Endothelial cell of umbilical vein (primary cell): ENCODE measurements at regions of chr22 and their contacts with region 1.

Region 1: GRCh38 chr22:22150457-22150856 is 94.1 kb upstream of the VPREB1 start:
- DNase-seq: no peak
- H3K4me3 ChIP-seq: no peak overlapping the region
- H3K27ac ChIP-seq: no peak overlapping the region
- H3K4me1 ChIP-seq: no peaks in the 10 kb centered on the region
- H3K27me3 ChIP-seq: peaks cover 26 to 61% of the 10 kb centered on the region in 2 experiments
- CTCF ChIP-seq: no peak
- POLR2A ChIP-seq: no peak

Region 2: GRCh38 chr22:22138915-22139314 is 11.5 kb before region 1 on chr22:
- CTCF ChIA-PET with region 1: interaction called, 10 read pairs
- POLR2A ChIA-PET with region 1: no interaction called
- dilution Hi-C with region 1: no loop called
- intact Hi-C with region 1: no loop called
- DNase-seq: no peak
- H3K4me3 ChIP-seq: no peak overlapping the region
- H3K27ac ChIP-seq: no peak overlapping the region
- H3K4me1 ChIP-seq: no peaks in the 10 kb centered on the region
- H3K27me3 ChIP-seq: peaks cover 36 to 76% of the 10 kb centered on the region in 2 experiments
- CTCF ChIP-seq: no peak
- POLR2A ChIP-seq: no peak